ENCODE measurements at regions of chr1 and their contacts with region 1.

Region 1: GRCh38 chr1:119235120-119235519 is 94.7 kb upstream of the WARS2 start:
- DNase-seq: no peak
- ATAC-seq: no peak
- H3K4me3 ChIP-seq: no peak overlapping the region
- H3K27ac ChIP-seq: no peak overlapping the region
- H3K4me1 ChIP-seq: no peaks in the 10 kb centered on the region
- H3K27me3 ChIP-seq: no peaks in the 10 kb centered on the region
- CTCF ChIP-seq: no peak

Region 2: GRCh38 chr1:119147661-119148090 is 87.4 kb before region 1 on chr1:
- CTCF ChIA-PET with region 1: no interaction called
- POLR2A ChIA-PET with region 1: no interaction called
- intact Hi-C with region 1: no loop called
- DNase-seq: no peak
- ATAC-seq: no peak
- H3K4me3 ChIP-seq: no peak overlapping the region
- H3K27ac ChIP-seq: no peak overlapping the region
- H3K4me1 ChIP-seq: 0 out of 2 replicates have a peak, but pooled peaks cover 3% of the 10 kb centered on the region
- H3K27me3 ChIP-seq: no peaks in the 10 kb centered on the region
- CTCF ChIP-seq: no peak

Region 3: GRCh38 chr1:119253366-119253765 is 18.2 kb after region 1 on chr1:
- CTCF ChIA-PET with region 1: no interaction called
- POLR2A ChIA-PET with region 1: no interaction called
- intact Hi-C with region 1: loop called (anchors 2 kb)
- DNase-seq: peak; percentile 78
- ATAC-seq: peak; percentile 47
- H3K4me3 ChIP-seq: no peak overlapping the region
- H3K27ac ChIP-seq: peak overlapping the region; percentile 78
- H3K4me1 ChIP-seq: peaks cover 38% of the 10 kb centered on the region
- H3K27me3 ChIP-seq: no peaks in the 10 kb centered on the region
- CTCF ChIP-seq: no peak

Region 4: GRCh38 chr1:119462964-119463363 is 227.8 kb after region 1 on chr1:
- CTCF ChIA-PET with region 1: no interaction called
- POLR2A ChIA-PET with region 1: no interaction called
- intact Hi-C with region 1: no loop called
- DNase-seq: peak; percentile 8
- ATAC-seq: no peak
- H3K4me3 ChIP-seq: no peak overlapping the region
- H3K27ac ChIP-seq: no peak overlapping the region
- H3K4me1 ChIP-seq: no peaks in the 10 kb centered on the region
- H3K27me3 ChIP-seq: no peaks in the 10 kb centered on the region
- CTCF ChIP-seq: no peak

Measured in PC-3 (cell line).